ENCODE measurements at regions of chr10 and their contacts with region 1.

Region 1: DNA sequence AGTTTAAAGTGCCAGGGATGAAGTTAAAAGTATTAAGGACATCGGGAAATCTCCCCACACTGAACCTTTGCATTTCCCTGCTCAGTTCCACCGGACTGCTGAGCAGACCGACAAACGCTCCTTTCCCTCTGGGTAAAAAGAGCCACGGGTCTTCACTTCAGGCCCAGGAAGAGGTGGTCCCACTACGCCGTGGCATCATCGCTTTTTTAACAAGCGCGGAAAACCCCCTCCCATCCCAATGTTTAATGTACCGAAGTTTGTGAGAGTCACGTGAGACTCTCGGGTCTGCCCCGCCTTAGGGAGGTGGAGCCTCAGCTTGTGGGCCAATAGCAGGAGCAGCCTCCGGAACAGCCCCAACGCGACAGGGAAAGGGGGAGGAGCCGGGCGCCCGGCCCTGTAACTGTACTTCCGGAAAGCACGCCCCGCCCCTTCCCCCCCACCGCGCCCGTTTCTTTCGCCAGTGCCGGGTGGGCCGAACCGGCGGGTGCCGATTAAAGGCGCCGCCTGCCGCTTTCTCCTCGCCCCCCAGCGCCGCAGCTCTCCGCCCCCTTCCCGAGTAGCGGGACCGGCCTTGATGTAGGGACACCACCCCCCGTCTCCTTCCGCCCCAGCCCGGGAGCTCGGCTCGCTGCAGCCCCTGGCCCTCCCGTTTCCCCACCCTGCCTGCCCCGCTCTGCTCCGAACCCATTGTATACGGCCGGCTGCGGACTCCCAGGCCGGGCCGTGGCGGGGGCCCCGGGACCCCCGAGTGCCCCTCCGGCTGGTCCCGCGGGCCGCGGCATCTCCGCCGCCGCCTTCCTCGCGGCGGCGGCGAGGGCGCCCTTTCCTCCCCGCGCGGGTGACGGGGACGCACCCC is 2.2 kb upstream of the TRIM8 start:
- H3K4me3 ChIP-seq: peak overlapping the region; percentile 69
- H3K27ac ChIP-seq: peak overlapping the region; percentile 86
- H3K4me1 ChIP-seq: peaks cover 7% of the 10 kb centered on the region
- CTCF ChIP-seq: peak; percentile 21; the same call in 1 of the 2 replicates

Region 2: DNA sequence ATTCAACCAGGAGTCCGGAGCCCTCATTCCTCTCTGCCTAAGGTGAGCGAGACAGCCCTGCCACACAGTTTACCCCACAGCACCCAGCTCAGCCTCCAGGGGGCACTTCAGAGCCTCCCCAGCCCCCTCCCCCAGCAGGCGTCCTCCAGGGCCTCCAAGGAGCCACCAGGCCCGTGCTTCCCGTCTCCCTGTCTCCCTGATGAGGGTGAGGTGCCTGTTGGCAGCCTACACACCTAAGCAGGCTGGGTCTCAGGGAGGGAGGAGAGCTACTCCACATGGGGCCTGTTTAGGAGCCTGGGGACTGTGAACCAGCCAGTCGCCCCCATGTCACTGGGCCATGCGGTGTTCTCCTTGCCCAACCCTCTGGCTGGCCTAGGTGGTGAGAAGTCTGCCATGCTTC is 26.7 kb before region 1 on chr10:
- CTCF ChIA-PET with region 1: interaction called, 11 read pairs
- POLR2A ChIA-PET with region 1: interaction called, 3 read pairs
- H3K4me3 ChIP-seq: no peak overlapping the region
- H3K27ac ChIP-seq: no peak overlapping the region
- H3K4me1 ChIP-seq: peaks cover 3% of the 10 kb centered on the region; the same call in 1 of the 2 replicates
- CTCF ChIP-seq: 0 out of 2 replicates have a peak, but pooled peaks have one; percentile 51

Region 3: GRCh38 chr10:102629661-102630614 is 12.2 kb before region 1 on chr10:
- CTCF ChIA-PET with region 1: interaction called, 4 read pairs
- POLR2A ChIA-PET with region 1: interaction called, 18 read pairs
- H3K4me3 ChIP-seq: no peak overlapping the region
- H3K27ac ChIP-seq: no peak overlapping the region
- H3K4me1 ChIP-seq: peaks cover 7% of the 10 kb centered on the region
- CTCF ChIP-seq: no peak

Region 4: DNA sequence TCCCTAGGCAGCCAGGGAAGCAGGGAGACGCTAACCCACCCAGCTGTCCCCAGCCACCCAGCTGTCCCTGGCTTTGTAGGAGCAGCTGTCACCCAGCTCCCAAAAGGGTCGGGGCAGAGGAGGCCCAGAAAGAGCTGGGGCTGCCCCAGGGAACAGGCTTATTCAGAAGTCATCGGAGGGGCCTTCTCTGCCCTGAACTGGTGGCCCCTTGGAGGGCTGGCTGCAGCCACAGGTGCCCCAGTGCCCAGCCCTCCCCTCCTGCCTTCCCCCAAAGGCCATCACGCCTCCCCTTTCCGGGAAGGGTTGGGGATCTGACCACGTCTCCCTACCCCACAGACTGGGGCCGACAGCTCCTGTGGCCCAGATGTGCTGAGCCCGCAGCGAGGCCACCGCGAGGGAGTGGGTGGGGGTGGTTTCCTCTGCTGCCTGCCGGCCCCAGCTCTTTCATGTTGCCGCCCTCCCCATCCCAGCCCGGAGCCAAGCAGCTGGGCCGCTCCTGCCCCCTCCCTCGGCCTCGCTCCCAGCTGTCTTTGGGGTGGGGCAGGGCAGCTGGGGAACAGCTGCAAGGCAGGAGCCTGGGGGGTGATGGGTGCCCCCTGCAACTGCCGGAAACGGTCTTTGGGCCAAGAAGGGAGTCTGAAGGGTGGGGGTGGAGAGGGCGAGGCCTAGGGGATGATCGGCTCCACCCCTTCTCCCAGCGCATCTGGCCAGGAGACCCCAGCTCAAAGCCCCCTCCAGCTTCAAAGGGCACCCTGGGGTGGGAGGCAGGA is 19.0 kb after region 1 on chr10:
- CTCF ChIA-PET with region 1: interaction called, 4 read pairs
- POLR2A ChIA-PET with region 1: interaction called, 11 read pairs
- H3K4me3 ChIP-seq: no peak overlapping the region
- H3K27ac ChIP-seq: no peak overlapping the region
- H3K4me1 ChIP-seq: no peaks in the 10 kb centered on the region
- CTCF ChIP-seq: no peak

Region 5: DNA sequence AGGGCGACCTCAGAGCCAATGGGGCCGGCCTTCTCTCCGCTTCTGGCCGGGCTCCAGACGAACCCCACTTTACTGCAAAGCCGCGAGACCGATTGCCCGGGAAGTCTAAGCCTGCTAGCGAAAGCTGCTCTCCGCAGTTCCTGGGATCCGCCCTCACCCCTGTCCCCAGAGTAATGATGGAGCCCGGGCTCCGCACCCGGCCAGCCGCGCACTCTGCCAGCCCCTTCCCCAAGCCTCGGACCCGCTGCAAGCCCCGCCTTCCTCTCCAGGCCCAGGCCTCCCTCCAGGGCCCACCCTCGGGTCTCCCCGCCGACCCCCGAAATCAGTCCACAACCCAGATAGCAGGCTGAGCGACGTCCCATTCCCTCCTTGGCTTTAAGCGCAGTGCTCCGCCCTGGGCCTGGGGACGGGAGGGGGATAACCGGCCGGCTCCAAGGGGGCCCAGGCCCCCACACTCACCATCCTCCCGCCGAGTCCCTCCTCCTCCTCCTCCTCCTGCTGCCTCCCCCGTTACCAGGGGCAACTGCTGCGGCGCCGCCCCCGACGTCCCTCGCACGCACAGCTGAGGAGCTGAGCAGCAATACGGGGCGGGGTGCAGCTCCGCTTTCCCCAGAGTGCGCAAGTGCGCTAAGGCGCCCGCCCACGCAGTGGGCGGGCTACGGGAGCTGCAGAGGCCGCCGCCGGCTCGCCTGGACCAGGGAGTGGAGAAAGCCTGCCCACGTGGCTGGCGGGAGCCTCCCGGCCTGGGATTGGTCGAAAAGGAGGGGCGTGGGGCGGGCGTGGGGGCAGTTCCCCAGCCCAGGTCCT is 71.9 kb after region 1 on chr10 and contains the start of gene ARL3:
- CTCF ChIA-PET with region 1: interaction called, 5 read pairs
- POLR2A ChIA-PET with region 1: interaction called, 24 read pairs
- H3K4me3 ChIP-seq: peak within 1 kb of the TSS; percentile 65
- H3K27ac ChIP-seq: peak within 1 kb of the TSS; percentile 83
- H3K4me1 ChIP-seq: peaks cover 24% of the 10 kb centered on the region
- CTCF ChIP-seq: peak; percentile 73; the same call in 1 of the 2 replicates

Measured in HEK293 (cell line).